Activated naive CD4-positive, alpha-beta T cell treated with anti-CD3 and anti-CD28 coated beads, Interleukin-2, amount 10 ng/mL, durations not matched to agents 7 days and 5 days (primary cell): ENCODE measurements at regions of chr14 and their contacts with region 1.

Region 1: GRCh38 chr14:97978341-97978740 is 1181.2 kb downstream of the VRK1 start:
- DNase-seq: peak; percentile 86
- H3K4me3 Mint-ChIP-seq: peak overlapping the region; percentile 89
- H3K27ac Mint-ChIP-seq: peak overlapping the region; percentile 98
- H3K4me1 Mint-ChIP-seq: peaks cover 61% of the 10 kb centered on the region
- H3K27me3 Mint-ChIP-seq: no peaks in the 10 kb centered on the region

Region 2: GRCh38 chr14:97796511-97796910 is 181.8 kb before region 1 on chr14:
- CTCF ChIA-PET with region 1: no interaction called
- DNase-seq: no peak
- H3K4me3 Mint-ChIP-seq: no peak overlapping the region
- H3K27ac Mint-ChIP-seq: no peak overlapping the region
- H3K4me1 Mint-ChIP-seq: peaks cover 9% of the 10 kb centered on the region
- H3K27me3 Mint-ChIP-seq: peaks cover 4% of the 10 kb centered on the region

Region 3: DNA sequence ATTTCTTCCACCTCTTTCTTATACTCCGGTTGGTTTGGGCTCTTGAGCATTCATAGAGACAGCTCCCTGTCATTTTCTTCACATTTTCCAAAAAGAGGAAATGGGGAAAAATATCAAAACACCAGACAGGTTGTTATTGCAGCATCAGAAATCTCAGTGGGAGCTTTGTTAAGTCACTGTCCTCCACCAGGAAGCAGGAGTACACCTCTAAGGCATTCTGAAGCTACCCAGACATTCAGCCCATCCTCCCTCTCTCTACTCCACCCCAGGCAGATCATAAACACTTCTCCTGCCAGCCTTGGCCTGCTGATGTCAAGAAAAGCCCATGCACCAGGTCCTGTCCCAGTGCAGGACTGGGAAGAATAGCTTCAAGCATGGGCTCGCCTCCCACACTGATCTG is 17.2 kb after region 1 on chr14:
- CTCF ChIA-PET with region 1: interaction called, 16 read pairs
- DNase-seq: no peak
- H3K4me3 Mint-ChIP-seq: no peak overlapping the region
- H3K27ac Mint-ChIP-seq: peak overlapping the region; percentile 93
- H3K4me1 Mint-ChIP-seq: peaks cover 47% of the 10 kb centered on the region
- H3K27me3 Mint-ChIP-seq: no peaks in the 10 kb centered on the region

Region 4: GRCh38 chr14:98006008-98006407 is 27.7 kb after region 1 on chr14:
- CTCF ChIA-PET with region 1: no interaction called
- DNase-seq: no peak
- H3K4me3 Mint-ChIP-seq: no peak overlapping the region
- H3K27ac Mint-ChIP-seq: no peak overlapping the region
- H3K4me1 Mint-ChIP-seq: peaks cover 17% of the 10 kb centered on the region
- H3K27me3 Mint-ChIP-seq: no peaks in the 10 kb centered on the region